Activated CD8-positive, alpha-beta T cell treated with anti-CD3 and anti-CD28 coated beads, Interleukin-2, amount 10 ng/mL, durations not matched to agents 7 days and 5 days (primary cell): ENCODE measurements at regions of chr17 and their contacts with region 1.

Region 1: DNA sequence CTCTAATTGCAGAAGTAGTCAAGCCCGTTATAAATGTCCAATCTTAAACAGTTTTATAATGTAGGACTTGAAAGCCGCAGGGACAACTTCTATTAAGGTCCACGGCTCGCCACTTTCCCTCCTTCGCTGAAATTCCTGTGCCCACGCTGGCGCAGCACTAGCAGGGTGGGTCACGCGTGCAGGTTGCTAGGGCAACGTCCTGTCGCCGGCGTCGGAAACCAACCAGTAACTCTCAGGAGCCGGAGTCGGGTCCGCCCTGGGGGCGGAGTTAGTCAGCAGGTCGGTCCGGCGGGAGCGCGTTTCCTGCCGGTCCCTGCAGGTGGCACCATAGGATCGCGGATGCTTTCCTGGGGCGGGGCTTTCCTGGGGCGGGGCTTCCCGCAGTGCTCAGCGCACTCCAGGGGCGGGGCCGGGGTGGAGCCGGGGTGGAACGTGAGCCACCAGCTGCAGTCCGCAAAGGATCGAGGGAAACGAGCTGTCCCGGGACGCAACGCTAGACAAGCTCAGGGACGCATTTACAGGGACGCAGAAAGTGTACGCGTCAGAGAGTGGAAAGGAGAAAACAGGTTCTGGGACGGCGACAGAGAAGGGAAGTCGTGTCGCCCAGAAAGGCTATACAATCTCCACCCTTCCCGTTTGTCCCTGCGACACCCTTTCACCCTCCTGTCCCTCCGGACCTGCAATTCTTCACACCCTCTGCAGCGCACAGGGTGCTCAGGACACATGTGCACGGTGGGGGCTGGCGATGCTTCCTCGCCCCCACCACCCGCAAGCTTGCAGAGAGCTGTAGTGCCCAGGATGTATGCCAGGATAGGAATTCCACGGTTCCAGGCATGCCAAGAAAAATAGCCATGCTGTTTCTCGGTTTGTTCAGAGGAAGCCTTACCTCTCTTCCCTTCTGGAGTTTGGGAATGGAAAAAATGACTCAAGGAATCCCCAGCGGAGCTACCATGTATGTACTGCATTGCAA is 12.4 kb downstream of the COPZ2 start:
- DNase-seq: peak; percentile 98
- ATAC-seq: peak; percentile 92
- H3K4me3 Mint-ChIP-seq: peak overlapping the region; percentile 80
- H3K27ac Mint-ChIP-seq: peak overlapping the region; percentile 71
- H3K4me1 Mint-ChIP-seq: peaks cover 33% of the 10 kb centered on the region
- H3K27me3 Mint-ChIP-seq: peaks cover 17% of the 10 kb centered on the region

Region 2: DNA sequence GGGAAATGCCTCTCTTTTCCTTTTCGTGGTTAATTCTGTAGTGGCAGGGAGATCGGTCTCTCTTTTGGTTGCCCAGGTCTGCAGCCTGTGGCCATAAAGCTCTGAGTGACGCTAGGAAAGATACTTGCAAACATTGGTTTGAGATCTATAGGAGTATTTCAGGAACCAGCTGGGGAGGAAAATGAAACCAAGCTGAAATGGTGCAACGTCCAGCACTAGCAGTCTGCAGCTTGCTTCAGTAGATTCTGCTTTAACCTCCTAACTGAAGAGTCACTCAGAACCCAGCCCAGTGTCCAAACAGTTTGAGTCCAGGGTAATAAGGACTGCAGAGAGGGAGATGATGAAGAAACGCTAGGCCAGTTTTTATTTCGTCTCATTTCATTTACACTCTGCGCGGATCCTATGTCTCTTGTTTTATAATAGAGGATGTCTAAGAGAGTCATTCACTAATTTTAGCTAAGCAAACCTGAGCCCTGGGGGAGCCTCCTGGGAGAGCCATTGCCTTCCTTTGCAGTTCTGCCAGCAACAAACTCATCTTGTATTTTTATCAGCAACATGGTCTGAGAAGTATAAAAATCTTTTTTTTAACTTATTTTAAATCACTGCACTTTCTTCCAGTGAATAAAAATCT is 117.2 kb before region 1 on chr17:
- CTCF ChIA-PET with region 1: no interaction called
- POLR2A ChIA-PET with region 1: no interaction called
- DNase-seq: no peak
- ATAC-seq: no peak
- H3K4me3 Mint-ChIP-seq: no peak overlapping the region
- H3K27ac Mint-ChIP-seq: peak overlapping the region; percentile 43
- H3K4me1 Mint-ChIP-seq: peaks cover 24% of the 10 kb centered on the region
- H3K27me3 Mint-ChIP-seq: no peaks in the 10 kb centered on the region

Region 3: DNA sequence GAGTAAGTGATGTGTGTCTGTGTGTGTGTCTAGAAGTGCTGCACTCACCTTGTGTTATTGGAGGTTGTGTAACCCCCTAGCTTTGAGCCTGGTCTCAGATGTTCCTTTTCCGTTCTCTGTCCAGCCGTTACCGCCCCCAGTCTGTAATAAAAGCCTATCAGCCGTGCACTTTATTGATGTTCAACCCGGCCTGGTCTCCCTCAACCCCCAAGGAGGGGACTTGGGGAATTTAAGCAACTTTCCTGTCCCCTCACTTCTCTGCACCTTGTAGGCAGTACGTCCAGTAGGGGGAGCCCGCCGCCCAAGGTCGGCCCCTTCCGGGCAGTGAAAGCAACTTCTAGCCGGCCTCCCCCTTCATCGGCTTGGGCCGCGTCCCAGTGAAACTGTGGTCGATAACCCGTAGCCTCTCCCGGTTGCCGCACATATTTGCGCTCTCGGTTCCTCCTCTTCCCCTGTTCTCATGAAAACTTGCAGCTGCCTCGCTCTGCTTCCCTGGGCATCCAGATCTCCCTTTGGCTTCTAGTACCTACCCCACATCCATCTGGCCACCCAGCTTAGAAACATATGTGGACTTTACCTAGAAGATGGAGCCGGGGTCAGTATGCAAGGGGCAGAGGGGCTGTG is 76.0 kb before region 1 on chr17:
- CTCF ChIA-PET with region 1: interaction called, 15 read pairs
- POLR2A ChIA-PET with region 1: no interaction called
- DNase-seq: peak; percentile 87
- ATAC-seq: peak; percentile 82
- H3K4me3 Mint-ChIP-seq: peak overlapping the region; percentile 54
- H3K27ac Mint-ChIP-seq: peak overlapping the region; percentile 77
- H3K4me1 Mint-ChIP-seq: peaks cover 50% of the 10 kb centered on the region
- H3K27me3 Mint-ChIP-seq: no peaks in the 10 kb centered on the region

Region 4: DNA sequence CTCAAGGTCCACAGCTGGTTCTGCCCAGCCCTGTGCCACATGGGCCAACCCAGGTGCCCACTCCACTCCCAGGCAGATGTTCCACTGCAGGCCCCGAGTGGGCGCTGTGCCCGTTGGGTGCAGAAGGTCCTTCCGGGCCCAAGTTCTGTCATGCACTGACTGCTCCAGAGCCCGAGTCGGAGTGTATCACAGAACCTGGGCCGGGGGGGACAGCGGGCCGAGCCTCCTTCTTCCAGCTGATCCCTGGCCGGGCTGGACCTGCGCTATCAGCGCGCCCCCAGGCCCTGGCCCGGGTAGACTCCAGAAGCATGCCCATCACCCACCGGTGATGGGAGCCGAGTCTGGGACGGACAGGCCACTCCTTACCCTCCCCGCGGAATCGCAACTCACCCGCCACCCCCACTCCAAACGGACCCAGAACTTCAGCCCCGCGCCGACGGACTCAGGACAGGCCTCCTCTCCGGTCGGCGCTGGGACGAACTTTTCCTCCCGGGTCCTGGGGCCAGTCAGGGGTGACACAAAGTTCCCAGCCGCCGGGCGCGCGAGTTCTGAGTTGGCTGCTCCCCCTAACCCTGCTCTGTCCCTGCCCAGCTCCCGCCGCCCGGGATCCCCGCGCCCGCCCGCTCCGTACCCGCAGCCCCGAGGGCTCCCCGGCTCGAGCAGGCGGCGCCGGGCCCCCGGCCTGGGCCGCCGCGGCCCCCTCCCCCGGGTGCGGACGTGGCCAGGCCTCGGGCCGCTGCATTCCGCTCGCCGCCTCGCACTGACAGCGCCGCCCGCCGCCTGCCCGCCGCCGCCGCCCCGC is 12.0 kb after region 1 on chr17 and contains the start of gene COPZ2:
- CTCF ChIA-PET with region 1: interaction called, 113 read pairs
- POLR2A ChIA-PET with region 1: no interaction called
- DNase-seq: peak; percentile 72
- ATAC-seq: peak; percentile 89
- H3K4me3 Mint-ChIP-seq: peak within 1 kb of the TSS; percentile 76
- H3K27ac Mint-ChIP-seq: peak within 1 kb of the TSS; percentile 53
- H3K4me1 Mint-ChIP-seq: peaks cover 15% of the 10 kb centered on the region
- H3K27me3 Mint-ChIP-seq: peaks cover 39% of the 10 kb centered on the region
- total RNA-seq, gene COPZ2: 5.1 to 5.5 TPM

Region 5: DNA sequence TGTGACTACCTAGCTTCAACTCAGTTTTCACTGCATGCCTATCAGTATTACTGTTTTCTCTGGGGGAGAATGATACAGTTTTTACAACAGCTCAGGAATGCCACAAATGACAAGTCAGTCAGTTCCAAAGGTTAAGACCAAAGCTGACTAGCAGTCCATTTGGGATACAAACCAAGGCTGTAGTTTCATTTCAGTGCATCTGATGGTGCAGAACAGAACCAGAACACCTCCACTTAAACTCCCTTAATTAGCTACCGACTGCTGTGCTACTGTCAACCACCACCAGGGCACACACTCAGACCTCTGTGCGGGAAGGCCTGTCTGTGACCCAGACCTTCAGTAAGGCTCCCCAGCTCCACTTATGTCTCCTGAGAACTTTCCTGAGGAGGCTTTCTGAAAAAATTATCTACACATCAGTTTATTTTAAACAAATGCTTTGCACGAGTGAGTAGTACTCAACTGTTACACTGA is 43.3 kb after region 1 on chr17:
- CTCF ChIA-PET with region 1: interaction called, 113 read pairs
- POLR2A ChIA-PET with region 1: interaction called, 6 read pairs
- DNase-seq: no peak
- ATAC-seq: peak; percentile 77
- H3K4me3 Mint-ChIP-seq: no peak overlapping the region
- H3K27ac Mint-ChIP-seq: no peak overlapping the region
- H3K4me1 Mint-ChIP-seq: no peaks in the 10 kb centered on the region
- H3K27me3 Mint-ChIP-seq: no peaks in the 10 kb centered on the region

Region 6: GRCh38 chr17:48093341-48094045 is 68.3 kb after region 1 on chr17:
- CTCF ChIA-PET with region 1: interaction called, 21 read pairs
- POLR2A ChIA-PET with region 1: no interaction called
- DNase-seq: no peak
- ATAC-seq: no peak
- H3K4me3 Mint-ChIP-seq: no peak overlapping the region
- H3K27ac Mint-ChIP-seq: no peak overlapping the region
- H3K4me1 Mint-ChIP-seq: peaks cover 11% of the 10 kb centered on the region
- H3K27me3 Mint-ChIP-seq: no peaks in the 10 kb centered on the region

Region 7: GRCh38 chr17:48123111-48123510 is 97.9 kb after region 1 on chr17:
- CTCF ChIA-PET with region 1: interaction called, 12 read pairs
- POLR2A ChIA-PET with region 1: no interaction called
- DNase-seq: no peak
- ATAC-seq: no peak
- H3K4me3 Mint-ChIP-seq: no peak overlapping the region
- H3K27ac Mint-ChIP-seq: peak overlapping the region; percentile 39
- H3K4me1 Mint-ChIP-seq: no peaks in the 10 kb centered on the region
- H3K27me3 Mint-ChIP-seq: no peaks in the 10 kb centered on the region

Region 8: GRCh38 chr17:48618256-48618897 is 593.2 kb after region 1 on chr17:
- CTCF ChIA-PET with region 1: interaction called, 12 read pairs
- POLR2A ChIA-PET with region 1: no interaction called
- DNase-seq: peak; percentile 86
- ATAC-seq: peak; percentile 69
- H3K4me3 Mint-ChIP-seq: peak overlapping the region; percentile 27
- H3K27ac Mint-ChIP-seq: no peak overlapping the region
- H3K4me1 Mint-ChIP-seq: peaks cover 39% of the 10 kb centered on the region
- H3K27me3 Mint-ChIP-seq: peaks cover 87% of the 10 kb centered on the region